ENCODE measurements at regions of chr11 and their contacts with region 1.

Region 1: GRCh38 chr11:126149759-126150625 is 61.5 kb downstream of the RPUSD4 start:
- DNase-seq: no peak
- ATAC-seq: peak in 4 of 8 donors; percentile 31 to 46 (median 34)
- H3K4me3 ChIP-seq: no peak overlapping the region
- H3K27ac ChIP-seq: no peak overlapping the region
- H3K4me1 ChIP-seq: peaks cover 0 to 8% (median 0%) of the 10 kb centered on the region in 9 donors
- H3K27me3 ChIP-seq: no peaks in the 10 kb centered on the region
- CTCF ChIP-seq: no peak

Region 2: GRCh38 chr11:126122863-126123262 is 27.1 kb before region 1 on chr11:
- intact Hi-C with region 1: loop called in 1 of 10 experiments (anchors 1 kb)
- DNase-seq: no peak
- ATAC-seq: peak in 1 of 8 donors; percentile 62
- H3K4me3 ChIP-seq: no peak overlapping the region
- H3K27ac ChIP-seq: peak overlapping the region in 1 of 10 donors; percentile 16
- H3K4me1 ChIP-seq: peaks cover 0 to 13% (median 4%) of the 10 kb centered on the region in 9 donors
- H3K27me3 ChIP-seq: no peaks in the 10 kb centered on the region
- CTCF ChIP-seq: no peak

Measured in heart right ventricle (tissue), 16 donors.